Gastrocnemius medialis (tissue), 4 donors: ENCODE measurements at regions of chr2 and their contacts with region 1.

Region 1: DNA sequence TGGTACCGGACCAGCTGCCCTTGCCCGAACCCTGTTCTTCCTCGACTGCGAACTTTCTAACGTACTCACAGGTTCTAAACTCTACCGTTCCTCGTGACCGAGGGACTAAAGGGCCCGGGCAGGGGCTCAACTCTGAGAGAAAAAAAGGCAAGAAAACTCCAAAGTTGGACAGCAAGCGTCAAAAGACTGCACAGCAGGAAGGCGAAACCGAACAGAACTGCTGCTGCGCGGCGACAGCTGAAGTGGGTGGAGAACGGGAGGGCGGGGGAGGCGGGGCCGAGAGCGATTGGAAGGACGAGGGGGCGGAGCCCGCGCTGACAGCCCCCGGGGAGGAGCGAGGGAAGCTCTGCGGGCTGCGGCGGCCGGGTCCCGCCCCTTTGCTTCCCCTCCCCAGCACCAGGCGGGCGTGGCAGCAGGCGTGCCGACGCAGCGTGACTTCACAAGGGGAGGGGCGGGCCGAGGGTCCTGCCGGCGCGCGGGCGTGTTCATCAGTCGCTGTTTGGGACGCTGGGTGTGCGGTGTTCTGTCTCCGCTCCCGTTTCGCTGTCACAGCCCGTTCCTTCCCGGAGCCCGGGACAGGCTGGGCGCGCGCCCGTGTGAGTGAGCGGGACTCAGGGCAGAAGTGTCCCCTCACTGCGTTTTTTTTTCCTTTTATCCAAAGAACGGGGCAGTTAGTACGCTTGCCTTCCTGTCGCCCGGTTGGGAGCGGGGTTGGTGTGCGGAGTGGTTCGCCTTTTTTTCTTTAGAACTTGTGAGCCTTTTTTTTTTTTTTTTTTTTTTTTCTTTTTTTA is at the start of gene NABP1:
- DNase-seq: peak; percentile 97 to 98
- ATAC-seq: peak; percentile 88 to 89
- H3K4me3 ChIP-seq: peak within 1 kb of the TSS; percentile 68 to 90 (median 84)
- H3K27ac ChIP-seq: peak within 1 kb of the TSS; percentile 86 to 97 (median 92)
- H3K4me1 ChIP-seq: peaks cover 3 to 25% of the 10 kb centered on the region in 2 donors
- H3K27me3 ChIP-seq: no peaks in the 10 kb centered on the region
- CTCF ChIP-seq: no peak
- POLR2A ChIP-seq: peak; percentile 98 to 99
- total RNA-seq, gene NABP1: 0.63 to 5.5 (median 4.0) TPM

Region 2: GRCh38 chr2:190648289-190649034 is 1029.4 kb before region 1 on chr2:
- in situ Hi-C with region 1: no loop called
- intact Hi-C with region 1: loop called (anchors 10 kb)
- DNase-seq: peak; percentile 70 to 76
- ATAC-seq: peak; percentile 78 to 80
- H3K4me3 ChIP-seq: peak overlapping the region; percentile 69 to 87 (median 82)
- H3K27ac ChIP-seq: peak overlapping the region; percentile 73 to 87 (median 82)
- H3K4me1 ChIP-seq: peaks cover 20 to 28% of the 10 kb centered on the region in 2 donors
- H3K27me3 ChIP-seq: no peaks in the 10 kb centered on the region
- CTCF ChIP-seq: no peak
- POLR2A ChIP-seq: peak; percentile 58 to 66

Region 3: GRCh38 chr2:191013932-191014652 is 663.7 kb before region 1 on chr2 and contains the start of gene STAT1:
- in situ Hi-C with region 1: loop called in 3 of 4 experiments (anchors 10 to 25 kb)
- intact Hi-C with region 1: no loop called
- DNase-seq: peak; percentile 83 to 88
- ATAC-seq: peak; percentile 92 to 96
- H3K4me3 ChIP-seq: peak within 1 kb of the TSS; percentile 82 to 98 (median 90)
- H3K27ac ChIP-seq: peak within 1 kb of the TSS; percentile 89 to 98 (median 95)
- H3K4me1 ChIP-seq: peaks cover 13 to 25% of the 10 kb centered on the region in 2 donors
- H3K27me3 ChIP-seq: no peaks in the 10 kb centered on the region
- CTCF ChIP-seq: peak in 4 of 5 experiments; percentile 18 to 28 (median 20)
- POLR2A ChIP-seq: peak; percentile 89 to 90
- total RNA-seq, gene STAT1: 23.0 to 36.9 (median 28.6) TPM

Region 4: DNA sequence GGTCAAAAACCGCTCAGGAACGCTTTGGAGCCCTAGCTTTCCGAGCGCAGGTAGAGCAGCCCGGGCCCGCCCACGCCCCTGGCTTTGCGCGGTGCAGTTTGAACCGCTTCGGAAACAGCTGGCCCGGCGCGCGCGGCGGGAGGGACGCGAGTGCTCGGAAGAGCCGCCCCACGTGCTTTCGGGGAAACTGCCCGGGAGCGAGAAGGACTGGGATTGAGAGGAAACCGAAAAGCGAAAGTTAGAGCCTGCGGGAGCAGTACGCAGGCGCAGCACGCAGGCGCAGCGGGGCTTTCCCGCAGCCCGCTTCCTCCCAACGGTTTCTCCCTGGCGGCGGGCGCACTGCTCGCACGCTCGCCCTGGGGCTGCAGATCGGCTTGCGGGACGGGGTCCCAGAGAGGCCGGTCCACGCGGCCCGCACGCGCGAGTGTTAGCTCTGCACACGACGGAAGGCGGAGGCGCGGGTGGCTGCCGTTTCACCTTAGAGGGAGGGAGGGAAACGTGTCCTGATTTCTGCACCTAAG is 657.6 kb before region 1 on chr2:
- in situ Hi-C with region 1: loop called in 3 of 4 experiments (anchors 10 to 25 kb)
- intact Hi-C with region 1: loop called (anchors 1 kb)
- DNase-seq: peak; percentile 86 to 93
- ATAC-seq: peak; percentile 99 to 100
- H3K4me3 ChIP-seq: peak overlapping the region; percentile 71 to 78 (median 75)
- H3K27ac ChIP-seq: peak overlapping the region; percentile 84 to 90 (median 86)
- H3K4me1 ChIP-seq: peaks cover 7 to 13% of the 10 kb centered on the region in 2 donors
- H3K27me3 ChIP-seq: no peaks in the 10 kb centered on the region
- CTCF ChIP-seq: peak in 4 of 5 experiments; percentile 14 to 51 (median 36)
- POLR2A ChIP-seq: peak; percentile 74 to 84

Region 5: GRCh38 chr2:191165176-191165643 is 512.6 kb before region 1 on chr2:
- in situ Hi-C with region 1: loop called in 1 of 4 experiments (anchors 25 kb)
- intact Hi-C with region 1: loop called (anchors 10 kb)
- DNase-seq: no peak
- ATAC-seq: peak; percentile 69 to 77
- H3K4me3 ChIP-seq: peak overlapping the region in 1 of 4 donors; percentile 38
- H3K27ac ChIP-seq: no peak overlapping the region
- H3K4me1 ChIP-seq: peaks cover 19 to 23% of the 10 kb centered on the region in 2 donors
- H3K27me3 ChIP-seq: no peaks in the 10 kb centered on the region
- CTCF ChIP-seq: peak in 4 of 5 experiments; percentile 22 to 65 (median 55)
- POLR2A ChIP-seq: no peak

Region 6: GRCh38 chr2:191593622-191594416 is 84.0 kb before region 1 on chr2:
- in situ Hi-C with region 1: no loop called
- intact Hi-C with region 1: no loop called
- DNase-seq: no peak
- ATAC-seq: no peak
- H3K4me3 ChIP-seq: no peak overlapping the region
- H3K27ac ChIP-seq: no peak overlapping the region
- H3K4me1 ChIP-seq: no peaks in the 10 kb centered on the region
- H3K27me3 ChIP-seq: no peaks in the 10 kb centered on the region
- CTCF ChIP-seq: no peak
- POLR2A ChIP-seq: no peak